HCT116 (cell line): ENCODE measurements at regions of chr14 and their contacts with region 1.

Region 1: GRCh38 chr14:90758028-90758889 is 58.0 kb downstream of the TTC7B start:
- DNase-seq: peak; percentile 79
- ATAC-seq: peak; percentile 94
- H3K4me3 ChIP-seq: peak overlapping the region; percentile 43 to 54
- H3K27ac ChIP-seq: peak overlapping the region; percentile 48
- H3K4me1 ChIP-seq: peaks cover 10 to 15% of the 10 kb centered on the region in 2 experiments; a peak in 3 of 4 replicates
- H3K27me3 ChIP-seq: no peaks in the 10 kb centered on the region
- CTCF ChIP-seq: peak; percentile 60 to 90 (median 71)
- POLR2A ChIP-seq: peak; percentile 24
- RAD21 ChIP-seq: peak; percentile 82

Region 2: DNA sequence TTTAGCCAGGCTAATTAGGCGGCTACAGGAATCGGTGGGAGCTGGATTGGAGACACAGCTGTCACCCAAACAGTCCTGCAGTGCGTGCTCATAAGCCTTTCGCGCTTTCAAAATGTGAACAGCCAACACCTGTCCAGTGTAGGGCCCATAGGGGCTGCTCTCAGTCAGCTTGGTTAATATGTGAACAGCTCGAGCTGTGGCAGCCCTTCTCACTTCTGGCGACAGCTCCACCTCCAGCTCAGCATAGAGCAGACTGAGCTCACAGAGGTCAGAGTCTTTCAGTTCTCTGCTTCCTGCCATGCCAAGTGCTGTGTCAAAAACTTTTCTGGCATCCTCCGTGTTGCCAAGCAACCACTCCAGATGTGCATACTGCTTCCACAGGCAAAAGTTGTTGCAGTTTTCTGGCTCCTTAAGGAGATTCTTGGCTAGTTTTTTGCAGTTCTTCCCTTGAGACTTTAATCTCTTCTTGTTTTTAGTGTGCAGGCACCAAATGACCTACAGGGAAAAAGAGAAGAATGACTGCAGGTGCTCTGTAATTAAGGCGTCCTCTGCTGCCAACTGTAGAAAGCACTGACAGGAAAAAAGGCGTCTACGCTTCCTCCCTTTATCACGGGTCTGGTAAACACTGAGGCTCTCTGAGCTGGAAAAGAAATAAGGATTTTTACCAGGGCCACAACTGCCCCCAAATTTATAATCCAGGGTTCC is 469.5 kb before region 1 on chr14:
- CTCF ChIA-PET with region 1: interaction called, 10 read pairs
- POLR2A ChIA-PET with region 1: no interaction called
- RAD21 ChIA-PET with region 1: no interaction called
- intact Hi-C with region 1: no loop called
- DNase-seq: no peak
- ATAC-seq: no peak
- H3K4me3 ChIP-seq: no peak overlapping the region
- H3K27ac ChIP-seq: no peak overlapping the region
- H3K4me1 ChIP-seq: no peaks in the 10 kb centered on the region
- H3K27me3 ChIP-seq: no peaks in the 10 kb centered on the region
- CTCF ChIP-seq: no peak
- POLR2A ChIP-seq: no peak
- RAD21 ChIP-seq: no peak

Region 3: GRCh38 chr14:90301668-90302090 is 456.6 kb before region 1 on chr14:
- CTCF ChIA-PET with region 1: interaction called, 32 read pairs
- POLR2A ChIA-PET with region 1: no interaction called
- RAD21 ChIA-PET with region 1: no interaction called
- intact Hi-C with region 1: loop called (anchors 10 kb)
- DNase-seq: no peak
- ATAC-seq: no peak
- H3K4me3 ChIP-seq: no peak overlapping the region
- H3K27ac ChIP-seq: no peak overlapping the region
- H3K4me1 ChIP-seq: peaks cover 0 to 7% of the 10 kb centered on the region in 2 experiments; a peak in 1 of 4 replicates
- H3K27me3 ChIP-seq: no peaks in the 10 kb centered on the region
- CTCF ChIP-seq: peak; percentile 22 to 45 (median 43); a peak in 4 of 6 replicates
- POLR2A ChIP-seq: no peak
- RAD21 ChIP-seq: peak; percentile 77

Region 4: GRCh38 chr14:90331497-90332435 is 426.5 kb before region 1 on chr14 and contains the start of gene NRDE2:
- CTCF ChIA-PET with region 1: no interaction called
- POLR2A ChIA-PET with region 1: no interaction called
- RAD21 ChIA-PET with region 1: no interaction called
- intact Hi-C with region 1: loop called (anchors 5 kb)
- DNase-seq: peak; percentile 90
- ATAC-seq: peak; percentile 97
- H3K4me3 ChIP-seq: peak within 1 kb of the TSS; percentile 69 to 73
- H3K27ac ChIP-seq: peak within 1 kb of the TSS; percentile 81
- H3K4me1 ChIP-seq: peaks cover 13 to 16% of the 10 kb centered on the region in 2 experiments; a peak in 3 of 4 replicates
- H3K27me3 ChIP-seq: 0 out of 2 replicates have a peak, but pooled peaks cover 5% of the 10 kb centered on the region
- CTCF ChIP-seq: no peak
- POLR2A ChIP-seq: peak; percentile 79
- RAD21 ChIP-seq: no peak
- total RNA-seq, gene NRDE2: 20.1 TPM

Region 5: GRCh38 chr14:90399541-90400444 is 358.5 kb before region 1 on chr14:
- CTCF ChIA-PET with region 1: interaction called, 9 read pairs
- POLR2A ChIA-PET with region 1: no interaction called
- RAD21 ChIA-PET with region 1: no interaction called
- intact Hi-C with region 1: loop called (anchors 1 kb)
- DNase-seq: peak; percentile 81
- ATAC-seq: peak; percentile 60
- H3K4me3 ChIP-seq: peak overlapping the region in 1 of 2 experiments; percentile 96; a peak in 2 of 4 replicates
- H3K27ac ChIP-seq: no peak overlapping the region
- H3K4me1 ChIP-seq: peaks cover 13 to 23% of the 10 kb centered on the region in 2 experiments
- H3K27me3 ChIP-seq: no peaks in the 10 kb centered on the region
- CTCF ChIP-seq: peak; percentile 100
- POLR2A ChIP-seq: no peak
- RAD21 ChIP-seq: peak; percentile 89

Region 6: GRCh38 chr14:90773196-90773486 is 14.9 kb after region 1 on chr14:
- CTCF ChIA-PET with region 1: interaction called, 23 read pairs
- POLR2A ChIA-PET with region 1: no interaction called
- RAD21 ChIA-PET with region 1: no interaction called
- intact Hi-C with region 1: no loop called
- DNase-seq: no peak
- ATAC-seq: no peak
- H3K4me3 ChIP-seq: no peak overlapping the region
- H3K27ac ChIP-seq: no peak overlapping the region
- H3K4me1 ChIP-seq: no peaks in the 10 kb centered on the region
- H3K27me3 ChIP-seq: no peaks in the 10 kb centered on the region
- CTCF ChIP-seq: no peak
- POLR2A ChIP-seq: no peak
- RAD21 ChIP-seq: no peak

Region 7: DNA sequence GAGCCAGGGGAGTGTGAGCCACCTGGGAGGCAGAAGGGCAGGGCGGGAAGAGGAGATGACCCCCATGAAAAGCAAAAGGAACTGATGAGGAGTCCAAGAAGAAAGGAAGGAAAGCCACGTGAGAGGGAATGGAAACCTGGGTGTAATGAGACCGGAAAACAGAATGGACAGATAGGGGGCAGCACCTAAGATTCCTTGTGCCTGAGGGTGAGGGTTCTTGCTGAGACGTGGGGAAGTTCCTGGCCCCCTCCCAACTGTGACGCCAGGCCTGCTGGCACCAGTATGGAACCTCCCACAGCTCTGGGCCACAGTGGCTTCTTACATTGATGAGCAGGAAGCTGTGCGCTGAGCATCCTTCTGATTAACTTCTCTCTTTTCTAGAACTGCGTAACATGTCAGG is 27.2 kb after region 1 on chr14:
- CTCF ChIA-PET with region 1: interaction called, 11 read pairs
- POLR2A ChIA-PET with region 1: no interaction called
- RAD21 ChIA-PET with region 1: interaction called in 1 of 2 experiments, 5 read pairs
- intact Hi-C with region 1: no loop called
- DNase-seq: peak; percentile 12
- ATAC-seq: peak; percentile 81
- H3K4me3 ChIP-seq: no peak overlapping the region
- H3K27ac ChIP-seq: no peak overlapping the region
- H3K4me1 ChIP-seq: no peaks in the 10 kb centered on the region
- H3K27me3 ChIP-seq: no peaks in the 10 kb centered on the region
- CTCF ChIP-seq: peak in 2 of 3 experiments; percentile 43 to 49; a peak in 3 of 6 replicates
- POLR2A ChIP-seq: no peak
- RAD21 ChIP-seq: peak; percentile 7; the same call in 1 of the 2 replicates